A673 (cell line): ENCODE measurements at regions of chr1 and their contacts with region 1.

Region 1: DNA sequence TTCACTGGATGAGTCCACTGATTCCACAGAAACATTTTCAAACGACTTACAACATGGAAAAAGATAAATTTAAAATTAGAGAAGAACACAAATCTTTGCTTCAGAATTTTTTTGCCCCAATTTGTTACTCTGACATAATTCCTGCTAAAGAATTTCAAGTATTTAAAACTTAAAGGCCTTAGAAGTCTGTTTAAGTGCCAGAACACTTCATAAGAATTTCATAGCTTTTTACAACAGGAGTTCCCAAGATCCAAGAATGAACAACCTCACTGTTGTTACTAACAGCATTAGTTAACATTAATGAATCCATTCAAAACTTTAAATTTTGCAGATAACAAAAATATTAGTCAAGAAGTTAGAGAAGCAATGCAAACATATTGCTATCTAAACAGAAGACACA is 31.7 kb downstream of the ARHGAP29 start:
- DNase-seq: no peak
- H3K4me3 ChIP-seq: no peak overlapping the region
- H3K27ac ChIP-seq: no peak overlapping the region
- H3K4me1 ChIP-seq: no peaks in the 10 kb centered on the region
- H3K27me3 ChIP-seq: peaks cover 6% of the 10 kb centered on the region
- CTCF ChIP-seq: no peak

Region 2: DNA sequence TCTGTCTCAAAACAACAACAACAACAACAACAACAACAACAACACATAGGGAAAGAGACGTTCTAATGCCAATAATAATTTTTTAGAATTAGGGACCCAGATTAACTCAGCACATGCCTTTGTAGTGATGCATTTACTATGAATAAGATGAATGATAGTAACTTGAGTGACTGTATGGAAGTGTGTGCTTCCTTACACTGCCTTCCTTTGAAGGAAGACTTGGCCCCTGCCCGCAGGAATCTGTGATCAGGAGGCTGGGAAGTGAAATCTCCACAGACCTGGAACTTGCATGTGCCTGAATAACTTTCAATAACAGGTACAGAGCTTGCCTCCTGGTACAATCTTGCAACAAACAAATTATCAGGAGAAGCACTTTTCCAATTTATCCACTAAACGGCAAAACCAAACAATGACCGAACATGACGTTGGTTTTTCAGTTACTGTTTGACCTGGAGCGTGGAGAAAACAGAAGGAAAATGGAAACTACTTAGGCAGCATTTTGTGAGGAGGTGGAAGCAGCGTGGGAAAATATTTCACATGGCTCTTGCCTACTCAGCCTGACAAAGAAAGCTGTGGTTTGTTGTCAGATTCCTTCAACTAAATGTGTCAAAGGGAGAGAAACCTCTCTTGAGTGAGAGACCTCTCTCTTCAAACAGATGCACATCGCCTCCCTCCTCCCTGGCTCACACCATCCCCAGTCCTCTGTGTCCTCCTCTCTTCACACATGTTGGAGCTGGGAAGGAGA is 74.6 kb before region 1 on chr1:
- CTCF ChIA-PET with region 1: no interaction called
- POLR2A ChIA-PET with region 1: no interaction called
- intact Hi-C with region 1: loop called (anchors 2 kb)
- DNase-seq: no peak
- H3K4me3 ChIP-seq: no peak overlapping the region
- H3K27ac ChIP-seq: no peak overlapping the region
- H3K4me1 ChIP-seq: no peaks in the 10 kb centered on the region
- H3K27me3 ChIP-seq: no peaks in the 10 kb centered on the region
- CTCF ChIP-seq: no peak